CD4-positive, alpha-beta memory T cell (primary cell): ENCODE measurements at regions of chrX and their contacts with region 1.

Region 1: GRCh38 chrX:18377796-18378195 is 23.3 kb upstream of the SCML2 start:
- DNase-seq: peak in 4 of 5 donors; percentile 16 to 28 (median 22)
- H3K4me3 ChIP-seq: no peak overlapping the region
- H3K4me3 Mint-ChIP-seq: peak overlapping the region in 1 of 8 donors; percentile 54
- H3K27ac ChIP-seq: no peak overlapping the region
- H3K27ac Mint-ChIP-seq: peak overlapping the region in 2 of 7 donors; percentile 24 to 36
- H3K4me1 ChIP-seq: no peaks in the 10 kb centered on the region
- H3K4me1 Mint-ChIP-seq: peaks cover 0 to 6% (median 4%) of the 10 kb centered on the region in 4 donors
- H3K27me3 ChIP-seq: no peaks in the 10 kb centered on the region
- H3K27me3 Mint-ChIP-seq: peaks cover 0 to 2% of the 10 kb centered on the region in 2 donors

Region 2: GRCh38 chrX:17744896-17745523 is 632.8 kb before region 1 on chrX:
- CTCF ChIA-PET with region 1: interaction called, 3 read pairs
- POLR2A ChIA-PET with region 1: no interaction called
- intact Hi-C with region 1: loop called (anchors 2 kb)
- DNase-seq: peak in 2 of 5 donors; percentile 6 to 9
- H3K4me3 ChIP-seq: no peak overlapping the region
- H3K4me3 Mint-ChIP-seq: no peak overlapping the region
- H3K27ac ChIP-seq: no peak overlapping the region
- H3K27ac Mint-ChIP-seq: no peak overlapping the region
- H3K4me1 ChIP-seq: peaks cover 6% of the 10 kb centered on the region
- H3K4me1 Mint-ChIP-seq: peaks cover 0 to 10% (median 7%) of the 10 kb centered on the region in 4 donors
- H3K27me3 ChIP-seq: no peaks in the 10 kb centered on the region
- H3K27me3 Mint-ChIP-seq: no peaks in the 10 kb centered on the region

Region 3: GRCh38 chrX:17788439-17788838 is 589.4 kb before region 1 on chrX:
- CTCF ChIA-PET with region 1: interaction called, 9 read pairs
- POLR2A ChIA-PET with region 1: no interaction called
- intact Hi-C with region 1: loop called (anchors 1 kb)
- DNase-seq: peak in 4 of 5 donors; percentile 18 to 31 (median 22)
- H3K4me3 ChIP-seq: no peak overlapping the region
- H3K4me3 Mint-ChIP-seq: no peak overlapping the region
- H3K27ac ChIP-seq: no peak overlapping the region
- H3K27ac Mint-ChIP-seq: peak overlapping the region in 1 of 7 donors; percentile 42
- H3K4me1 ChIP-seq: no peaks in the 10 kb centered on the region
- H3K4me1 Mint-ChIP-seq: peaks cover 0 to 6% (median 4%) of the 10 kb centered on the region in 4 donors
- H3K27me3 ChIP-seq: no peaks in the 10 kb centered on the region
- H3K27me3 Mint-ChIP-seq: no peaks in the 10 kb centered on the region

Region 4: DNA sequence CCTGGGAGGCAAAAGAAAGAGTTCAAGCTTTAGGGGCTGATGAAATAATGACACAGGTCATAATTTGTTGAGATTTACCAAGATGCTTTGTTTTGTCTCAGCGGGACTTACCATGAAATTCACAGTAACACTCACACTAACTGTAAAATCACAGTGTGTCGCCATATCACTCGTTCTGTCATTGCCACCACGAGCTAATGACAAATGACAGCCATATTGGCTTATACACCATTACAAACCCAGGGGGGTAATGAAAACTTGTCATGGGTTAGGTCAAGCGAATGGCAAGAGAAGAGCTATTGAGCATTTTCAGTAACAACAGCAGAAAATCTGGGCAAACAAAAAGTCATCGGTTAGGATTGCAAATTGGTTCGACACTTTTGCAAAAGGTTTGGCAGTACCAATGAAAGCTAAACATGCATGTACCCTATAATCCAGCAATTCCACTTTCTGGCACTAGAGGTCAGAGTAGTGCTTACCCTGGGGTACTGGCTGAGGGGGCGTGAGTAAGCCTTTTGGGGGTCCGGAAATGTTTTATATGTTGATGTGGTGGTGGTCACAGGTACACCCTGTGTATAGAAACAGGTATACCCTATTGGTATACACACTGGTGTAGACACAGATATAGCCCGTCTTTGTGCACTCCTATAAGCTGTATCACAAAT is 432.8 kb before region 1 on chrX:
- CTCF ChIA-PET with region 1: interaction called, 4 read pairs
- POLR2A ChIA-PET with region 1: no interaction called
- intact Hi-C with region 1: loop called (anchors 2 kb)
- DNase-seq: peak in 3 of 5 donors; percentile 2 to 14 (median 4)
- H3K4me3 ChIP-seq: no peak overlapping the region
- H3K4me3 Mint-ChIP-seq: no peak overlapping the region
- H3K27ac ChIP-seq: no peak overlapping the region
- H3K27ac Mint-ChIP-seq: no peak overlapping the region
- H3K4me1 ChIP-seq: no peaks in the 10 kb centered on the region
- H3K4me1 Mint-ChIP-seq: no peaks in the 10 kb centered on the region
- H3K27me3 ChIP-seq: no peaks in the 10 kb centered on the region
- H3K27me3 Mint-ChIP-seq: peaks cover 0 to 2% of the 10 kb centered on the region in 2 donors

Region 5: DNA sequence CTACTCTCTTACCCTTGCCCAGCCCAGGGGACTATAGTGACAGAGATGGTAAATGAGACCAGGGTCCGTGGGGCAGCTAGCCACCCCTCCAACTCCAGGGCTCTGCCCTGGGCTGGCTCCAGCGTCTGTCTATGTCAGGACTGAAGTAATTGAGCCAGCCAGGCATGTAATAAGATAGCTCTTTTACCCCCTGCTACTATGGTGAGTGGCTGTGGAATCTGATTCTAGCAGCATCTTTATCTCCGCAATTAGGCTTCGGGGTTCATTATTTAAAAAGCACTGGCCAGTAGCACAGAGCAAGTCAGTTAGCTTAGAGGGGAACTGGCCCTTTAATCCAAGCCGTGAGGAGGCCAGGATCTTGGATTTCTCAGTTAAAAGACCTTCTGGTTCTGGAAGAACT is 393.4 kb before region 1 on chrX:
- CTCF ChIA-PET with region 1: no interaction called
- POLR2A ChIA-PET with region 1: no interaction called
- intact Hi-C with region 1: no loop called
- DNase-seq: no peak
- H3K4me3 ChIP-seq: no peak overlapping the region
- H3K4me3 Mint-ChIP-seq: no peak overlapping the region
- H3K27ac ChIP-seq: no peak overlapping the region
- H3K27ac Mint-ChIP-seq: no peak overlapping the region
- H3K4me1 ChIP-seq: peaks cover 13% of the 10 kb centered on the region
- H3K4me1 Mint-ChIP-seq: peaks cover 7 to 18% (median 10%) of the 10 kb centered on the region in 4 donors
- H3K27me3 ChIP-seq: no peaks in the 10 kb centered on the region
- H3K27me3 Mint-ChIP-seq: no peaks in the 10 kb centered on the region

Region 6: GRCh38 chrX:18354369-18355223 is 23.2 kb before region 1 on chrX and contains the start of gene SCML2:
- CTCF ChIA-PET with region 1: no interaction called
- POLR2A ChIA-PET with region 1: interaction called, 4 read pairs
- intact Hi-C with region 1: loop called (anchors 1 kb)
- DNase-seq: peak; percentile 15 to 36 (median 23)
- H3K4me3 ChIP-seq: peak within 1 kb of the TSS in 1 of 2 donors; percentile 32
- H3K4me3 Mint-ChIP-seq: peak within 1 kb of the TSS; percentile 82 to 87 (median 84)
- H3K27ac ChIP-seq: no peak within 1 kb of the TSS
- H3K27ac Mint-ChIP-seq: peak within 1 kb of the TSS in 2 of 7 donors; percentile 37 to 57
- H3K4me1 ChIP-seq: peaks cover 4% of the 10 kb centered on the region
- H3K4me1 Mint-ChIP-seq: peaks cover 0 to 5% (median 2%) of the 10 kb centered on the region in 4 donors
- H3K27me3 ChIP-seq: no peaks in the 10 kb centered on the region
- H3K27me3 Mint-ChIP-seq: no peaks in the 10 kb centered on the region
- total RNA-seq, gene SCML2: 1.2 to 1.7 TPM